ENCODE measurements at regions of chr2 and their contacts with region 1.

Region 1: GRCh38 chr2:138391956-138392355 is 109.6 kb upstream of the SPOPL start:
- DNase-seq: no peak
- ATAC-seq: no peak
- H3K4me3 ChIP-seq: no peak overlapping the region
- H3K4me3 Mint-ChIP-seq: no peak overlapping the region
- H3K27ac ChIP-seq: no peak overlapping the region
- H3K27ac Mint-ChIP-seq: no peak overlapping the region
- H3K4me1 ChIP-seq: no peaks in the 10 kb centered on the region
- H3K4me1 Mint-ChIP-seq: no peaks in the 10 kb centered on the region
- H3K27me3 ChIP-seq: no peaks in the 10 kb centered on the region
- H3K27me3 Mint-ChIP-seq: no peaks in the 10 kb centered on the region
- CTCF ChIP-seq: no peak

Region 2: DNA sequence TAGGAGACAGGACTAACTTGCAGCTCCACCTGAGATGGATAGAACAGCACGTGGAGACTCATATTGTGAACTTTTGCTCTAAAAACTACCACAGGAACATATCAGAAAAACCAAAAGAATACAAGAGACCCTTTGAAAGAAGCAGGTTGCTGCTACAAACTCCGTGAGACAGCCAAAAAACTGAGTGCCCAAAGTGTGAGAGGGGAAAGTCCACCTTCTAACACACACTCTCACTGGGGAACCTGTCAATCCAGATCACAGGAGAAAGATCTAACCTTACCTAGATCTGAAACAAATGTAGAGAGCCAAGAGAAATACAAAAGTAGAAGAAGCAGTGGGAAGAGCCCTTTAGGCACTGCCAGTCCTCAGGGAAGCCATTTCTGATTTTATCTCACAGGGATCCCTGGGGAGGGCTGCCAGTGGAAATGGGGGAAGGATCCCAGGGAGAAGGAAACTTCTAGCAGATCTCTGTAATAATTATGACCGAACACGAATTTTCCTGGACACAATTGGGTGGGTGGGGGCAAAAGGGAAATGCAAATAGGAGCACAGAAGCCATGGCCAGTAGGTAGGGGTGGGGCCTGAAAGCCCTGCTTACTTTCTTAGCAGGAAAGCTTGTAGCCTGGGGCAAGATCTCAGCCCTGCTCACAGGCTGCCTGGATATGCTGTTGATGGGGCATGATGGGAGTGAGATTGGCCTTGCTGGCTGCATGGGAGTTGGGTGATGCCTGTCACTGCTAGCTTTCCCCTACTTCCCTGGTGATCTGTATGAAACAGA is 63.5 kb after region 1 on chr2:
- CTCF ChIA-PET with region 1: no interaction called
- POLR2A ChIA-PET with region 1: no interaction called
- intact Hi-C with region 1: loop called in 1 of 2 experiments (anchors 2 kb)
- DNase-seq: no peak
- ATAC-seq: no peak
- H3K4me3 ChIP-seq: no peak overlapping the region
- H3K4me3 Mint-ChIP-seq: no peak overlapping the region
- H3K27ac ChIP-seq: no peak overlapping the region
- H3K27ac Mint-ChIP-seq: no peak overlapping the region
- H3K4me1 ChIP-seq: no peaks in the 10 kb centered on the region
- H3K4me1 Mint-ChIP-seq: no peaks in the 10 kb centered on the region
- H3K27me3 ChIP-seq: no peaks in the 10 kb centered on the region
- H3K27me3 Mint-ChIP-seq: no peaks in the 10 kb centered on the region
- CTCF ChIP-seq: no peak